Activated CD4-positive, alpha-beta memory T cell treated with anti-CD3 and anti-CD28 coated beads for 36 hours (primary cell): ENCODE measurements at regions of chr1 and their contacts with region 1.

Region 1: DNA sequence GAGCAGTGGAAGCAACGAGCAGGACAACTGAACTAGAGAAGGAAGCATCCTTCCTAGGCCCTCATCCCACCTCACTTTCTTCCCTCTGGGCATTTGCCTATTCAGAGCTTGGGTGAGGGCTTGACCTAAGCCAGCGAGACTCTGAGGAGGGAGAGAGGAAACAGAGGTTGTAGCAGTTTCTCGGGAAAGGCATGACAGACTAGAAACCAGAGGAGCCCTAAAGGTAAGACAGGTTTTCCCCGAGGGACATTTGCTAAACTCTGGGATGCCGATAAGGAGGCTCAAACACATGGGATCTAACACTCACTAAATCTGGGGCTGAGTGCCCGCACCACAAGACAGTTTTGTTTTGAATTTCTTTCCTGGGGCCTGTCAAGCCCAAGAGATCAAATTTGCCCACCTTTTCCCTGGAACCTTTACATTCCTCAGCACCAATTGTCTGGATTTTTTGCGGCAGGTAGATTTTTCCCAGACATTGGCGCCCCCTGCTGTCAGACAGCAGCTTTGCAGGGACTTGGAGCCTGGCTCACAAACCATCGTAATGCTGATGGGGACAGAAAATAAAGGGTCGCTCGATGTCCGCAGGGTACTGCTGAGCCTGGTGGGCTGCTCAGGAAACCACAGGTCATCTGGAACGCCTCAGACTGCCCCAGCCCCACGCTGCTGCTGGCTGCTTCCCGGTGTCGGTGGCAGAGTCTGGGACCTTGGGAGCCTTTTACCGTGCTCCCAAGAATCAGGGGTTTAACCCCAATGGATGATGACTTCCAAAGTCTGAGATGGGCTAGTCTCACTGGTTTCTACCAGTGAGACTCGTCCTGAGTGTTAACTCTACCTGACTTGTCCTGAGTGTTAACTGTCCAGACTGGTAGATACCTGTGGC is 23.4 kb upstream of the TSPAN2 start:
- DNase-seq: peak; percentile 62
- H3K4me3 Mint-ChIP-seq: no peak overlapping the region
- H3K27ac Mint-ChIP-seq: no peak overlapping the region
- H3K4me1 Mint-ChIP-seq: peaks cover 14% of the 10 kb centered on the region
- H3K27me3 Mint-ChIP-seq: no peaks in the 10 kb centered on the region

Region 2: GRCh38 chr1:114368560-114369246 is 744.0 kb before region 1 on chr1:
- CTCF ChIA-PET with region 1: no interaction called
- POLR2A ChIA-PET with region 1: no interaction called
- intact Hi-C with region 1: no loop called
- DNase-seq: no peak
- H3K4me3 Mint-ChIP-seq: no peak overlapping the region
- H3K27ac Mint-ChIP-seq: no peak overlapping the region
- H3K4me1 Mint-ChIP-seq: no peaks in the 10 kb centered on the region
- H3K27me3 Mint-ChIP-seq: no peaks in the 10 kb centered on the region

Region 3: GRCh38 chr1:114979278-114979891 is 133.4 kb before region 1 on chr1:
- CTCF ChIA-PET with region 1: interaction called, 60 read pairs
- POLR2A ChIA-PET with region 1: no interaction called
- intact Hi-C with region 1: loop called (anchors 1 kb)
- DNase-seq: peak; percentile 72
- H3K4me3 Mint-ChIP-seq: no peak overlapping the region
- H3K27ac Mint-ChIP-seq: no peak overlapping the region
- H3K4me1 Mint-ChIP-seq: no peaks in the 10 kb centered on the region
- H3K27me3 Mint-ChIP-seq: peaks cover 10% of the 10 kb centered on the region

Region 4: DNA sequence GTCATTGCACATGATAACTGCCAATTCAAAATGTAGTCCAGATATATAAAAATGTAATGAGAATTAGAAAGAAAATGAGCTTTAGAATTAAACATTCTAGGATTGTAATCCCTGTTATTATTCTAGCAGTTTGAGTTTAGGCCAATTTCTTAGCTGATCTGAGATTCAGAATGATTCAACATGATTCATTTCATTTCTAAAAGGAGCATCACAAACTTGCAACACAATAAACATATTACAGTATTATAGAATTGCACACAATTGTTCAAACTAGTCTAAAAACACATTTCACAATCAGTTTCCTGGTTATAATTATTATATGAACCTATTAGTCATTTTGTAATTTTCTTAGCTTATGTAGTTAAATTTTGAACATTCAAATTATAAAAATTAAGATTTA is 126.5 kb before region 1 on chr1:
- CTCF ChIA-PET with region 1: interaction called, 60 read pairs
- POLR2A ChIA-PET with region 1: no interaction called
- intact Hi-C with region 1: no loop called
- DNase-seq: no peak
- H3K4me3 Mint-ChIP-seq: no peak overlapping the region
- H3K27ac Mint-ChIP-seq: no peak overlapping the region
- H3K4me1 Mint-ChIP-seq: no peaks in the 10 kb centered on the region
- H3K27me3 Mint-ChIP-seq: peaks cover 4% of the 10 kb centered on the region

Region 5: DNA sequence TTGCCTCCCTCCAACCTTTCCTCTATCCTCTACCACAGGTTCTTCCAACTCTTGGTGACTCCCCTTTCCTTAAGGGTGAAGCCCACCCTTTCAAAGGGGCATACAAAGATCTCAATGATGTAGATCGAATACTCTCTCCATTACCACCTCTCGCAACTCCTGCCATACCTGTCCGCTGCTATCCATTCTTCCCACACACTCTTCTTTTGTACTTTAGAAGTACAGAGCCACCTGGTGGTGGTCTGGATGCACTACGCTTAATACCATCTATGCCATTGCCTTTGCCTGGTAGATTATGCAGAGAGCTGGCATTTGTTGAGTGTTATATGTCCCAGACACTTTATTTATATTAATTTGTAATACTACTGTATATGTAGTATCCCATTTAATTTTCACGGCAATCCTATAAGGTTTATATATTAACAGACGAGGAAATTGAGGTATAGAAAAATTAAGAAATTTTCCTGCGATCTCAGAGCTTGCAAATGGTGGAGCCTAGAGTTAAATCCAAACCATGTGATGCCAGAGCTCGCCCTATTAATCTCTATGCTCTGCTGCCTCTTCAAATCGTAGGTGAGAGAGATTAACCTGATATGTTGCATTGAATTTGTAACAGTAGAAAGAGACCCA is 60.2 kb before region 1 on chr1:
- CTCF ChIA-PET with region 1: interaction called, 33 read pairs
- POLR2A ChIA-PET with region 1: no interaction called
- intact Hi-C with region 1: no loop called
- DNase-seq: peak; percentile 67
- H3K4me3 Mint-ChIP-seq: no peak overlapping the region
- H3K27ac Mint-ChIP-seq: no peak overlapping the region
- H3K4me1 Mint-ChIP-seq: peaks cover 3% of the 10 kb centered on the region
- H3K27me3 Mint-ChIP-seq: no peaks in the 10 kb centered on the region

Region 6: GRCh38 chr1:115098979-115099692 is 13.6 kb before region 1 on chr1:
- CTCF ChIA-PET with region 1: interaction called, 12 read pairs
- POLR2A ChIA-PET with region 1: no interaction called
- intact Hi-C with region 1: no loop called
- DNase-seq: peak; percentile 78
- H3K4me3 Mint-ChIP-seq: peak overlapping the region; percentile 80
- H3K27ac Mint-ChIP-seq: peak overlapping the region; percentile 85
- H3K4me1 Mint-ChIP-seq: peaks cover 47% of the 10 kb centered on the region
- H3K27me3 Mint-ChIP-seq: no peaks in the 10 kb centered on the region

Region 7: DNA sequence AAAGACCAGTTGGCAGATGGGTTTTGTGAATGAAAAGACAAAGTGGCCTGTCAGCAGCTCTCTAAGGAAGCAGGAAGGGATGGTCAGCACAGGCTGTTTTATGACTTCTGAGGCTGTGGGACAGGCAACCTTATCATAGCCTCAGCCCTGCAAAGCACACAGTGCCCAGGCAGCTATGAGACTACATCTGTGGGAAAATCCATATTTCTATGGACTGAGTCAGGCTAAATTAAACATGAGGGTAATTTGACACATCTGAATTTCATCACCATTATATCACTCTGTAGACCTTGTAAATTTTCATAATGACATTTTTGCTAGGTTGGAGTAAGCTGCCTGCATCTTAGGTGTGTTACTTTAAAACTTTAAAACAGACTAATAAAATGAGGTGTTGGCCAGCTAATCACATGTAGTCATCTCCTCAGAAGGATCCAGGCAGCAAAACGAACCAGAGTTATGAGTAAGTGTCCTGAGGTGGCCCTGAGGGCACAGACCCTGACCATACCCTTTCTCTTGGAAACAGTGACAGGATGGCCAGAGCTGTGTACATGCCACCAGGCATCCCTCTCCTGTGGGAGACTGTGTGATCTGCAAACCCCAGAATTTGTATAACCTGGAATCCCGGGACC is 210.8 kb after region 1 on chr1:
- CTCF ChIA-PET with region 1: no interaction called
- POLR2A ChIA-PET with region 1: no interaction called
- intact Hi-C with region 1: no loop called
- DNase-seq: no peak
- H3K4me3 Mint-ChIP-seq: no peak overlapping the region
- H3K27ac Mint-ChIP-seq: no peak overlapping the region
- H3K4me1 Mint-ChIP-seq: no peaks in the 10 kb centered on the region
- H3K27me3 Mint-ChIP-seq: peaks cover 20% of the 10 kb centered on the region